Mammary epithelial cell (primary cell): ENCODE measurements at regions of chr1 and their contacts with region 1.

Region 1: GRCh38 chr1:109112652-109113285 is 1.1 kb upstream of the ELAPOR1 start:
- DNase-seq: peak; percentile 77
- H3K4me3 ChIP-seq: peak overlapping the region in 1 of 3 experiments; percentile 14
- H3K27ac ChIP-seq: peak overlapping the region; percentile 31
- H3K4me1 ChIP-seq: peaks cover 12% of the 10 kb centered on the region
- H3K27me3 ChIP-seq: peaks cover 2% of the 10 kb centered on the region
- CTCF ChIP-seq: peak; percentile 95 to 99

Region 2: DNA sequence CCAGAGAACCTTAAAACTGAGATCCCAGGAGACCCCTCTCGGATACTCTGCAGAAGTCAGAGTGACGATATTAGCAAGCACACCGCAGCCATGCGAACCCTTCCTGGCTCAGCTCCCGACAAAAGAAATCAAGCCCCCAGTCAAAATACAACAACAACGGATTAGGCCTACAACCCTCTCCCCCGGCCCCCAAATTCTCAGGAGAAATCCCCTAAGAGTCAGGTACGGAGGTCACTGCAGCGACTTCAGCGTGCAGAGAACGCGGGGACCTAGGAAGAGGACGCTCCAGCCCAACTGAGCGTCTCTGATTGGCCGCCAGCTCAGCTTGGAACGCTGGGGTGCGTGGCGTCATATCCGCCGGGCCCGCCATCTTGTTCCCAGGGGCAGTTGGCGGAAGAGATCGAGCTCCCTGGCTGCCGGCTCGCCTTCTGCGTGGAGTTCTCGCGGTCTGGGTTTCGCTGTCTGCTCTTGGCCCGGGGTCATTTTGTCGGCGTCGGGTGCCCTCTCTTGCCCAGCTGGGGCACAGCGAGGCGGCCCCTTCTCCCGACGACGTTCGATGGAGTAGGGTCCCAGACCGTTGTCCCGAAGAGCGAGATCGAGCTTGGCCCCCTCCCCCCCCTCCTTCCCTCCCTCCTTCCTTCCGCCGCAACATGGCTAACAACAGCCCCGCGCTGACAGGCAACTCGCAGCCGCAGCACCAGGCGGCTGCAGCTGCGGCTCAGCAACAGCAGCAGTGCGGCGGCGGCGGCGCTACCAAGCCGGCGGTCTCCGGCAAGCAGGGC is 420.6 kb before region 1 on chr1 and contains the start of gene PRPF38B:
- CTCF ChIA-PET with region 1: no interaction called
- dilution Hi-C with region 1: no loop called
- in situ Hi-C with region 1: no loop called
- intact Hi-C with region 1: loop called (anchors 5 kb)
- DNase-seq: peak; percentile 88
- H3K4me3 ChIP-seq: peak within 1 kb of the TSS; percentile 87 to 96 (median 94)
- H3K27ac ChIP-seq: peak within 1 kb of the TSS; percentile 75
- H3K4me1 ChIP-seq: no peaks in the 10 kb centered on the region
- H3K27me3 ChIP-seq: no peaks in the 10 kb centered on the region
- CTCF ChIP-seq: no peak
- total RNA-seq, gene PRPF38B: 14.5 to 52.2 TPM

Region 3: DNA sequence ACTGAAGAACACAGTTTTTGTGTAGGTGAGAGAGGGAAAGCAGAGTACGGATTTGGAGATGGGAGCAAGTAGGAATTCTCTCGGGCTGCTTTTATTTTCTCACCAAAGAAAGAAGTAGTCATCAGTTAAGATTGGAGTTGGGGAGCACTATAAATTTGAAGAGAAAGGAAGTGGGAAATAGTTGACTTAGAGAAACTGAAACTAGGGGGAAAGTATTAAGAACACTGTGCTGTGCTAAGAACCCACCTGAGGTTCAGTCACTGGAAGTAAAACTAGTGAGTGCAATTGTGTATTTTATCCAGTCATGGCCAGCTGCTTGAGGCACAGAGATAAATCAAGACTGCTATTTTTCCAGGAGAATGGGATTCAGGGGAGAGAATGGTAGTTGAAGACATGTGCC is 186.8 kb before region 1 on chr1:
- CTCF ChIA-PET with region 1: interaction called, 3 read pairs
- dilution Hi-C with region 1: no loop called
- in situ Hi-C with region 1: no loop called
- intact Hi-C with region 1: loop called (anchors 5 kb)
- DNase-seq: no peak
- H3K4me3 ChIP-seq: no peak overlapping the region
- H3K27ac ChIP-seq: no peak overlapping the region
- H3K4me1 ChIP-seq: no peaks in the 10 kb centered on the region
- H3K27me3 ChIP-seq: no peaks in the 10 kb centered on the region
- CTCF ChIP-seq: no peak

Region 4: GRCh38 chr1:109011335-109011734 is 101.4 kb before region 1 on chr1:
- CTCF ChIA-PET with region 1: no interaction called
- dilution Hi-C with region 1: loop called (anchors 5 kb)
- in situ Hi-C with region 1: no loop called
- intact Hi-C with region 1: no loop called
- DNase-seq: no peak
- H3K4me3 ChIP-seq: no peak overlapping the region
- H3K27ac ChIP-seq: no peak overlapping the region
- H3K4me1 ChIP-seq: no peaks in the 10 kb centered on the region
- H3K27me3 ChIP-seq: no peaks in the 10 kb centered on the region
- CTCF ChIP-seq: no peak

Region 5: DNA sequence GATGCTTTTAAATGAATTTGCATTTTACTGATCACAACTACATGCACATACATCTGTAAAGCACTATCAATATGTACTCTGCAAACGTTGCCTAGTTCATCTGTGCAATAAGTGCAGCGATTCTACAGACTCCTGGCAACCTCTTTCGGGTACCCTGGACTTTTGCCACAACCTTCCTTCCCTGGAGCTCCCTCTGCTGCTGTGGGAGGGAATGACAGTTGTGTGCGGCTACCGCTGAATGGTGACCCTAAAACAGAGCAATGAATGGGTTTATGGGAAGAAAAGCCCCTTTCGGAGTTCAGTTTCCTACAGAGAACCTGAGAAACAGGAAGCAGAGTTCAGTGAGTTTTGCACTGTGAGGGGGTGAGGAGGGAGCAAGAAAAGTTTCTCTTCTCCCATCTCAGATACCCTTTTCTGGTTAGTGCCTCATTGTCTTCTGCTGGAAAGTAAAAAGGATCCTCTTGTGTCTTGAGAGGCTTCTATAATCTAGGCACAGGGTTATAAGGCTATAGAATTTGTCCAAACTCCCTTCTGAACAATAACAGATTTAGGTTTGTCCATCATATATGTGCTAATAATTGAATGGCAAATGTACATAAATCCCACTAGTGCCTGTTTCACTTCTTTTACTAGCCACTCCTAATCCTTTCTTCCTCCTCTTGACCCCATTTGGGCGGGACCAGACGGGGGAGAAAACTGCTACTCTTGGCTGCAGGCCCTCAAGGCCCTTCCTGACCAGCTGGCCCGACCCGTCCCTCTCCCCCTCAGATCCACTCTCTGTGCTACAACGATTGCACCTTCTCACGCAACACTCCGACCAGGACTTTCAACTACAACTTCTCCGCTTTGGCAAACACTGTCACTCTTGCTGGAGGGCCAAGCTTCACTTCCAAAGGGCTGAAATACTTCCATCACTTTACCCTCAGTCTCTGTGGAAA is 81.2 kb after region 1 on chr1:
- CTCF ChIA-PET with region 1: no interaction called
- dilution Hi-C with region 1: loop called (anchors 5 kb)
- in situ Hi-C with region 1: no loop called
- intact Hi-C with region 1: loop called (anchors 1 kb)
- DNase-seq: no peak
- H3K4me3 ChIP-seq: no peak overlapping the region
- H3K27ac ChIP-seq: no peak overlapping the region
- H3K4me1 ChIP-seq: peaks cover 21% of the 10 kb centered on the region
- H3K27me3 ChIP-seq: no peaks in the 10 kb centered on the region
- CTCF ChIP-seq: peak; percentile 91 to 96

Region 6: GRCh38 chr1:109397538-109398342 is 285.0 kb after region 1 on chr1 and contains the start of gene SORT1:
- CTCF ChIA-PET with region 1: no interaction called
- dilution Hi-C with region 1: no loop called
- in situ Hi-C with region 1: no loop called
- intact Hi-C with region 1: loop called (anchors 10 kb)
- DNase-seq: peak; percentile 77
- H3K4me3 ChIP-seq: peak within 1 kb of the TSS; percentile 54 to 73 (median 65)
- H3K27ac ChIP-seq: peak within 1 kb of the TSS; percentile 16
- H3K4me1 ChIP-seq: peaks cover 20% of the 10 kb centered on the region
- H3K27me3 ChIP-seq: no peaks in the 10 kb centered on the region
- CTCF ChIP-seq: no peak
- total RNA-seq, gene SORT1: 24.6 to 41.8 TPM